Posterior cingulate gyrus (tissue), 11 donors: ENCODE measurements at regions of chr9 and their contacts with region 1.

Region 1: DNA sequence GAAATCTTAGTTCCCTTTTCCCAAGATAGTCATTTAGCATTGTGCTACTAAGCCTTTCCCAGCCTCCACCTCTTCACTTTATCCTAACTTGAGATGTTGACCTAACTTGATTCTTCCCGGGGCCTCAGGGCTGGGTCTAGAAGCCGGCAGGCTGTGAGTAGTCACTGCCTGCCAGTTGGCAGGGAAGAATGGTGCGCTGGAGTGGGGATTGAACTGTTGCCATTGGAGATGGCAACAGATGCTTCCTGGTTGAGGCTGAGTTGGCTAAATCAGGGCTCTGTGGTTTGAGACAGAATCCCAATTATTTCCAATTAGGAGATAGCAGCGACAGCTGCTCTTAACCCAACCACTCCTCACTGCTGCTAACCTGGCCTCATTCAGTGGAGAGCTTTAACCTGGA is 343.1 kb downstream of the BRINP1 start:
- DNase-seq: peak in 9 of 10 donors; percentile 33 to 91 (median 59)

Region 2: DNA sequence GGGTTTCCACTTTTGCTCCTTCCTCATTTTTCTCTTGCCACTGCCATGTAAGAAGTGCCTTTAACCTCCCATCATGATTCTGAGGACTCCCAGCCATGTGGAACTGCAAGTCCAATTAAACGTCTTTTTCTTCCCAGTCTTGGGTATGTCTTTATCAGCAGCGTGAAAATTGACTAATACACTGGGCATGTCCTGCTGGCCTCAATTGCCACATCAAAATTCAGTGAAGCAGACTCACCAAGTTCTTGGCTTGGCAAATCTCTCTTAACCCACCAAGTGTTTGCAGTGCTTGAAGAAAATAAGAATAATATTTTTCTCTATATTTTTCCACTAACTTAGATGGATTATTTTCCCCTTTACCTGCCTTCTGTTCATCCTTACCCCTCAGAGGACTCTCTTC is 131.1 kb after region 1 on chr9:
- intact Hi-C with region 1: loop called (anchors 10 kb)
- DNase-seq: no peak

Region 3: GRCh38 chr9:119252671-119253299 is 226.7 kb after region 1 on chr9:
- intact Hi-C with region 1: no loop called
- DNase-seq: no peak